ENCODE measurements at regions of chr15 and their contacts with region 1.

Region 1: GRCh38 chr15:25933456-25934158 is 70.5 kb upstream of the ATP10A start:
- DNase-seq: peak; percentile 73
- ATAC-seq: peak; percentile 95
- H3K4me3 Mint-ChIP-seq: peak overlapping the region; percentile 71
- H3K27ac Mint-ChIP-seq: no peak overlapping the region
- H3K4me1 Mint-ChIP-seq: peaks cover 12% of the 10 kb centered on the region
- H3K27me3 Mint-ChIP-seq: no peaks in the 10 kb centered on the region
- CTCF ChIP-seq: peak; percentile 36; the same call in 1 of the 2 replicates

Region 2: DNA sequence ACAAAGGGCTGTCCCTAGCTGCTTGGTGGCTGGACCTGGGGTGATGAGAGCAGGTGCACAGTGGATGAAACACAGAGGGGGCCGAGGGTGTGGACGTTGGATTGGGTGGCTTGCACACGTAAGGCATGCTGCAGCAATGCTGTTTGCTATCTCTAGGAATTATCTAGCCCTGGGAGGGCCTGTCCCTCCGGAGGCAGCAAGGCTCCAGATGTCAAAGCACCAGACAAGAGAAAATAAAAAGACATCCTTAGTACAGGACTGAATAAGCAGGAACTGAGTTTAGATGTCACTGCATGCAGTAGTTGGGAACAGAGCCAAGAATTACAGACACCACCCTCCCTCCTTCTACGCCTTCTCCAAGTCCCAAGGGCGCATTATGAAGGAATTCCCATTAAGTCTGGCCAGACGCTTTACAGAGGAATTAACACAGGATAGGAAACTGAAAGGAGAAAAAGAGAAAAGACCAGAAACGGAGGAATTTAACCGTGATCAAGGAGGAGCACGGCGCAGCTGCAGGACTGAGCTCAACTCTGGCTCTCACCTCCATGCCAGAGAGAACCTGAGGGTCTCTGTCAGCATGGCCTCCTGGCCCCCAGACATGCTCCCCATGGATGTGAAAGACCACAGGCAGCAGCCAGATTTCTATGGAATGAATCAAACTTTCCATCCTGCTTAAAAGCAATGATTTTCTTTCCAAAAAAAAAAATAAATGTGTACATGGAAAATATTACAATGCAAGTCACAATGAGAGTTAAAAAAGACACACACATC is 84.3 kb before region 1 on chr15:
- CTCF ChIA-PET with region 1: interaction called, 12 read pairs
- POLR2A ChIA-PET with region 1: no interaction called
- DNase-seq: no peak
- ATAC-seq: peak; percentile 7; the same call in 1 of the 2 replicates
- H3K4me3 Mint-ChIP-seq: peak overlapping the region; percentile 77
- H3K27ac Mint-ChIP-seq: no peak overlapping the region
- H3K4me1 Mint-ChIP-seq: peaks cover 58% of the 10 kb centered on the region
- H3K27me3 Mint-ChIP-seq: no peaks in the 10 kb centered on the region; the same call in 1 of the 2 replicates
- CTCF ChIP-seq: no peak

Region 3: GRCh38 chr15:25947323-25948314 is 14.0 kb after region 1 on chr15:
- CTCF ChIA-PET with region 1: interaction called, 57 read pairs
- POLR2A ChIA-PET with region 1: interaction called, 4 read pairs
- DNase-seq: peak; percentile 51
- ATAC-seq: no peak
- H3K4me3 Mint-ChIP-seq: peak overlapping the region; percentile 25; the same call in 1 of the 2 replicates
- H3K27ac Mint-ChIP-seq: peak overlapping the region; percentile 60; the same call in 1 of the 2 replicates
- H3K4me1 Mint-ChIP-seq: peaks cover 15% of the 10 kb centered on the region
- H3K27me3 Mint-ChIP-seq: no peaks in the 10 kb centered on the region
- CTCF ChIP-seq: no peak